Activated T-helper 2 cell treated with anti-CD3 and anti-CD28 coated beads, Interferon-gamma antibody, Interleukin-2, Interleukin-4, amounts not matched to agents 10 μg/mL and 5 μg/mL and 100 μg/mL, durations not matched to agents 14 hours and 24 hours and 36 hours (primary cell): ENCODE measurements at regions of chr2 and their contacts with region 1.

Region 1: DNA sequence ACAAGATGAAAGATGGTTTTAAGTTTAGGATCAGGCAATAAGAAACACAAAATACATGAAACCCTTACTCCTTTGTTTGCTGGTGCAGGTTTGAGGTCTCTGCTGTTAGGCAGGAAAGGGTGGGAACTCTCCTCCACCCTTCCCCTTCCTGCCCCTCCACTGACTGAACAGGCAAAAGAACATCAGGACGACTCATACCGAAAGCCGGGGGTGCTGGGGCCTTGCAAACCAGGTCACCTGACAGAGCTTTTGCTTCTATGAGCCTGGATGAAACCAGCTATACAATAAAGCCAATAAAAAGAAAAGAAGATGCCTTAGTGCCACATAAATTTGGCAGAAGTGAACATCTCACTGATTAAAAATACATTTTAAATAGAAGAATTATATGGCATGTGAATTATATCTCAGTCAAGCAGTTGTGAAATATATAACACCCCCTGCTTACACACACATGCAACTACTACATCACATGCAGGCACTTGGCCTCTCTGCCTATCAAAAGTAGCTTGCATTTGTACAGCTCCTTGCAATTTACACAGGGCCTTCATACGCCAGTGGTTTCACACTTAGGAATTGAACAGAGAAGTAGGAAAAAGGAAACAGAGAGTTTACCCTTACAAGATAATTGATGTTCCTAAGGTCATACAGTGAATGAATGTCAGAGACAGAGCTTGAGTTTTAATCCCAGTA is 215.1 kb upstream of the TRIB2 start:
- DNase-seq: peak; percentile 82
- H3K4me3 Mint-ChIP-seq: peak overlapping the region; percentile 34
- H3K27ac Mint-ChIP-seq: peak overlapping the region; percentile 76
- H3K4me1 Mint-ChIP-seq: peaks cover 87% of the 10 kb centered on the region
- H3K27me3 Mint-ChIP-seq: no peaks in the 10 kb centered on the region

Region 2: GRCh38 chr2:12416600-12416999 is 85.0 kb before region 1 on chr2:
- intact Hi-C with region 1: loop called (anchors 2 kb)
- DNase-seq: peak; percentile 54
- H3K4me3 Mint-ChIP-seq: no peak overlapping the region
- H3K27ac Mint-ChIP-seq: no peak overlapping the region
- H3K4me1 Mint-ChIP-seq: peaks cover 59% of the 10 kb centered on the region
- H3K27me3 Mint-ChIP-seq: no peaks in the 10 kb centered on the region

Region 3: GRCh38 chr2:12456293-12457151 is 45.1 kb before region 1 on chr2:
- intact Hi-C with region 1: loop called (anchors 2 kb)
- DNase-seq: peak; percentile 54
- H3K4me3 Mint-ChIP-seq: peak overlapping the region; percentile 61
- H3K27ac Mint-ChIP-seq: peak overlapping the region; percentile 74
- H3K4me1 Mint-ChIP-seq: peaks cover 42% of the 10 kb centered on the region
- H3K27me3 Mint-ChIP-seq: no peaks in the 10 kb centered on the region

Region 4: GRCh38 chr2:12514631-12515433 is 13.2 kb after region 1 on chr2:
- intact Hi-C with region 1: loop called (anchors 1 kb)
- DNase-seq: peak; percentile 60
- H3K4me3 Mint-ChIP-seq: peak overlapping the region; percentile 35
- H3K27ac Mint-ChIP-seq: peak overlapping the region; percentile 77
- H3K4me1 Mint-ChIP-seq: peaks cover 47% of the 10 kb centered on the region
- H3K27me3 Mint-ChIP-seq: no peaks in the 10 kb centered on the region

Region 5: GRCh38 chr2:12642865-12643264 is 141.3 kb after region 1 on chr2:
- intact Hi-C with region 1: loop called (anchors 5 kb)
- DNase-seq: no peak
- H3K4me3 Mint-ChIP-seq: no peak overlapping the region
- H3K27ac Mint-ChIP-seq: no peak overlapping the region
- H3K4me1 Mint-ChIP-seq: peaks cover 25% of the 10 kb centered on the region
- H3K27me3 Mint-ChIP-seq: peaks cover 9% of the 10 kb centered on the region

Region 6: DNA sequence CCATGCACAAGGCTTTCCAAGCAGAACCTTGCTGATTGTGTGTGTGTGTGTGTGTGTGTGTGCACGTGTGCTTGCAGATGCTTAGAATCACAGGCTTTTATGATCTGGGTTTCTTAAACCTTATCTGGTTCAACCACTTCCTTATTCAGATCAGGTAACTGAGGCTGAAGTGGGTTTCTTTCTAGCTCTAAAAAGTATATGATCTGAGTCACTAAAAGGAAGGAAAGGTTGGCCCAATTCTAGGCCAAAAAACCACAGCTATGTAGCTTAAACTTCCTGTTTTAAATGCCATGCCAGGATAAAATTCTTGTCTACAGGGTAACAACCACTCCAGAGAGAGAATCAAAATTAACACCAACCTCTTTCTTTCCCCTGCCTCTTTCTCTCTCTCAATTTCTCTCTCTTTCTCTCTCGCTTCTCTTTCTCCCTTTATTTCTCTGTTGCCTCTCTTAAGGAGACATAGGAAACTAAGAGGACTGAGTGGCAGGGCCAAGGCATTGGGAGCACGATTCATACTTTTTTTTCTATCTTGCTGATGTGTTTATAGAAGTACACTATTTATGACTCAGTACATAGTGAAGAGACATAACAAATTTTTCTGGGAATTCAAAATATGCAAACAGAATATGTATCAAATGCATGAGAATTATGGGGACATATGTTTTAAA is 355.5 kb after region 1 on chr2:
- intact Hi-C with region 1: loop called (anchors 5 kb)
- DNase-seq: peak; percentile 28
- H3K4me3 Mint-ChIP-seq: no peak overlapping the region
- H3K27ac Mint-ChIP-seq: no peak overlapping the region
- H3K4me1 Mint-ChIP-seq: peaks cover 20% of the 10 kb centered on the region
- H3K27me3 Mint-ChIP-seq: peaks cover 3% of the 10 kb centered on the region

Region 7: DNA sequence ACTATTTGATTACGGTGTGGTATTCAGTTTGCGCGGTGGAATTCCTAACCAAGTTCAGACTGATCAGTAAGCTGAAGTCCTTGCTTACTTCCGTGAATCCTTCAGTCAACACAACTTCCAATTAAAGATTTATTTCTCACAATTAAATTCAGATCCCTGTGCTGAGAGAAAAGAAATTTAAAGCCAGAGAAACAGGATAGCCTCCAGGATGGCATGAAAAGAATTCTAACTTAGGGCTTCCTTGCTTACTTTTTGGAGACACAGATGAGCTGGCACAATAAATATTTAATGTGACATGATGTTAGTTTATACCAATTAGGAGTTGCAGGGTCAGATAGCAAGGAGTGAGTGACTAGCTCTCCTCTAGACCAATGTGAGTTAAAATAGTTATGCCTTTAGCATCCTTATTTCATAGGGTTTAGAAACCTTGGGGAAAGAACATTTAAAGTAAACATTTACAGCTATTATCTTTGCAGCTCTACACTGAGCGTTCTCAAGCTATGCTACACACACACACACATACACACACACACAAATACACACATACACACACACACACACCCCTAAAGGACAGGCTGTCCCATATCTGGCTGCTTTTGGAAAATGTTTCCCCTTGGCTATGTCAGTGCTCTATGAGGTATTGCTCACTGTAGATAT is 366.1 kb after region 1 on chr2:
- intact Hi-C with region 1: no loop called
- DNase-seq: no peak
- H3K4me3 Mint-ChIP-seq: no peak overlapping the region
- H3K27ac Mint-ChIP-seq: no peak overlapping the region
- H3K4me1 Mint-ChIP-seq: no peaks in the 10 kb centered on the region
- H3K27me3 Mint-ChIP-seq: peaks cover 36% of the 10 kb centered on the region